Astrocyte of the cerebellum (primary cell): ENCODE measurements at regions of chr9 and their contacts with region 1.

Region 1: DNA sequence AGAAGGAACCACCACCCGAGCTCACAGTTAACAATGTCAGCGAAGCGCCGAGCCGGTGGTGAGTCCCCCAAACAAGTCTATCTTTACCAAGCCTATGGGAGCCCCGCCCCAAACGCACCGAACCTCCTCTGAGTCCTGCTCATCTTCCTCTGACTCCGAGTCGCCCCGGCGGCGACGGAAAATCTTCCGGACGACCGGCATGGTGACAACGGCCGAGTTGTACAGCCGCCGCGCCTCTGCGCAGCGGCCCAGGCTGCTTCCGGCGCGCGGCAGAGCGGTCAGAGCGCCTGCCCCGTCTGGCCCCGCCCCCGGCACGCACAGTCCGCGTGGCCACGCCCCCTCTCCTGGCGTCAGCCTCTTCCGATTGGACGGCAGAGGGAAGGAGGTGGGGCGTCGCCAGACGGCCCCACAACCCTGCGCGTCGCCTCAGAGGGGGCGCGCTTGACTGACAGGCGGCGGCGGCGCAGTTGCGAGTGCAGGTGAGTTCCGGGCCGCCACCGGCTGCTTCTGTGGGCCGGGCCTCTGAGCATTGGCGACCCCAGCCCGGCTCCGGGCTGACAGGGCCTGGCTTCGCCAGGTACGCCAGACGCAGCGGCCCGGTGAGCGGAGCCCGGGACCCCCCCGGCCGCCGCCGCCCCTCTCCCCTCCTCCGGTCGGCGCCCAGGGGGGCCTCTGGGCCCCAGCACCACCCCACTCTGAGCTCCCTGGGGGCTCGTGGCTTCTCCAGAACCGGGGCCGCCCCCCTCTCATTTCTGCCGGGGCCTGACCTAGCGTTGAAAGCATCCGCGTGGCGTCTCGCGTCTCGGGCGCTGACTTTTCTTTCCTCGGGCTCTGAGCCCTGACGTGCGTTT is at the starts of genes C9orf78 and USP20:
- DNase-seq: peak; percentile 80
- H3K4me3 ChIP-seq: peak within 1 kb of the TSS; percentile 76
- CTCF ChIP-seq: no peak

Region 2: GRCh38 chr9:130078547-130078946 is 243.3 kb after region 1 on chr9:
- in situ Hi-C with region 1: loop called (anchors 25 kb)
- DNase-seq: no peak
- H3K4me3 ChIP-seq: no peak overlapping the region
- CTCF ChIP-seq: no peak